ENCODE measurements at regions of chr1 and their contacts with region 1.

Region 1: GRCh38 chr1:221897321-221897721 is 155.4 kb upstream of the DUSP10 start:
- DNase-seq: no peak
- ATAC-seq: no peak

Region 2: GRCh38 chr1:221458447-221459156 is 438.7 kb before region 1 on chr1:
- intact Hi-C with region 1: no loop called
- DNase-seq: no peak
- ATAC-seq: no peak

Region 3: DNA sequence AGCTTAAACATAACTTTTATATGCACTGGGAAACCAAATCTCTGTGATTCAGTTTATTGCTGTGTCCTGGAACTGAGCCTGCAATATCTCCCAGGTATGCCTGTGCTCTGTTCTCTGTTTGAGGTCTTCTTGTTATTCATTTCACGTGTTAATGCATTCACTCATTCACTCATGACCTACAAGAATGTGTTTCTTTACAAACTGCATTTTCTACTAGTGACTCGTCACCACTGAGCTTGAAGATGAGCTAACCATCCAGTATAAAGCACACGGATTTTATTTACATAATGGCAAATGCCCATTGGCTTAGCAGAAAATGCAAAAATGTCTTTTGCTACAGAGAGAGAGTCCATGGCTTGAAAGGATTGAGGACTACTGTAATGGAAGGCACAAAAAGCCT is 80.4 kb before region 1 on chr1:
- intact Hi-C with region 1: loop called in 1 of 2 experiments (anchors 5 kb)
- DNase-seq: no peak
- ATAC-seq: no peak